Prostate gland (tissue), 2 donors: ENCODE measurements at regions of chr10 and their contacts with region 1.

Region 1: GRCh38 chr10:120979435-120980278 is 128.5 kb downstream of the WDR11 start:
- DNase-seq: peak; percentile 61
- H3K4me3 ChIP-seq: peak overlapping the region; percentile 15 to 24
- H3K27ac ChIP-seq: peak overlapping the region in 1 of 2 donors; percentile 35
- H3K4me1 ChIP-seq: peaks cover 11% of the 10 kb centered on the region
- H3K27me3 ChIP-seq: no peaks in the 10 kb centered on the region
- CTCF ChIP-seq: no peak
- POLR2A ChIP-seq: no peak

Region 2: GRCh38 chr10:121070275-121071065 is 90.8 kb after region 1 on chr10:
- intact Hi-C with region 1: loop called (anchors 10 kb)
- DNase-seq: peak; percentile 46
- H3K4me3 ChIP-seq: no peak overlapping the region
- H3K27ac ChIP-seq: no peak overlapping the region
- H3K4me1 ChIP-seq: peaks cover 4% of the 10 kb centered on the region
- H3K27me3 ChIP-seq: no peaks in the 10 kb centered on the region
- CTCF ChIP-seq: peak in 2 of 4 experiments; percentile 11 to 30
- POLR2A ChIP-seq: no peak

Region 3: DNA sequence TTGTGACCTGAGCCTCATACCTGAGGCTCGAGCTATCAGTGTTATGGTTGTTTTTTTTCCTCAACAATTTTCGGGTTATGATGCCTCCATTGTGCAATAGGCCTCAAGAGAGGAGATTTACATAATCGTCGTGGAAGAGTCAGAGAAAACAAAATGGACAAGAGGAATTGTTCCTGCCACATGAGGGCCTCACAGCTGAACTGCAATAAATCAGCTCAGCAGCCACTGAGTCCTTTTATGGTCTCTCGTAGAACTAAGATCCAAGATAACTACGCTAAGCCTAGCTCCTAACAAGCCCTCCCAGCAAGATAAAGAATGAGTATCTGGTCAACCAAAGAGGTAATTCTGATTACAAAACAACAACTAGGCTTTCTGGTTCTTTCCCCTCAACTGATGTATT is 208.3 kb after region 1 on chr10:
- intact Hi-C with region 1: loop called (anchors 10 kb)
- DNase-seq: peak; percentile 10
- H3K4me3 ChIP-seq: no peak overlapping the region
- H3K27ac ChIP-seq: no peak overlapping the region
- H3K4me1 ChIP-seq: no peaks in the 10 kb centered on the region
- H3K27me3 ChIP-seq: no peaks in the 10 kb centered on the region
- CTCF ChIP-seq: no peak
- POLR2A ChIP-seq: no peak

Region 4: GRCh38 chr10:121459765-121460453 is 480.3 kb after region 1 on chr10:
- intact Hi-C with region 1: no loop called
- DNase-seq: no peak
- H3K4me3 ChIP-seq: no peak overlapping the region
- H3K27ac ChIP-seq: peak overlapping the region in 1 of 2 donors; percentile 12
- H3K4me1 ChIP-seq: no peaks in the 10 kb centered on the region
- H3K27me3 ChIP-seq: no peaks in the 10 kb centered on the region
- CTCF ChIP-seq: no peak
- POLR2A ChIP-seq: no peak